Endothelial cell of umbilical vein (primary cell): ENCODE measurements at regions of chr13 and their contacts with region 1.

Region 1: DNA sequence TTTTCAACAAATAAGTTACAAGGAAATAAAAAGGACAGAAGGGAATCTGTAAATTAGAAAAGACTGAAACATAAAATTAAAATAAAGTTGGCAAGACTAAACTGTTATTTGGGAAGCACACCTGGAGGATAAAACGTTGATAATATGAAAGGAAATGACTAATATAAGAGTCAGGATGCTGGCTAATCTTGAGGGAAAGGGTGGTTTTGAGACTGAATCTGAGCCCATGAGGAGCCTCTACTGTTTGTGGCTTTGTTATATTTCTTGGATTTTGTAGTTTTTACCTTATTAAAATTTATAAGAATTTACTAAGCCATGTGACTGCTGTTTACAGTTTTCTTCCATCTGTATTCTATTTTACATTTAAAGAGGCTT is 718.0 kb upstream of the SPRY2 start:
- DNase-seq: peak; percentile 46
- H3K4me3 ChIP-seq: no peak overlapping the region
- H3K27ac ChIP-seq: peak overlapping the region; percentile 32
- H3K4me1 ChIP-seq: peaks cover 13% of the 10 kb centered on the region
- H3K27me3 ChIP-seq: no peaks in the 10 kb centered on the region
- CTCF ChIP-seq: no peak
- POLR2A ChIP-seq: no peak

Region 2: GRCh38 chr13:82330499-82330898 is 1271.6 kb after region 1 on chr13:
- CTCF ChIA-PET with region 1: no interaction called
- POLR2A ChIA-PET with region 1: no interaction called
- dilution Hi-C with region 1: no loop called
- intact Hi-C with region 1: loop called (anchors 2 kb)
- DNase-seq: peak; percentile 21
- H3K4me3 ChIP-seq: no peak overlapping the region
- H3K27ac ChIP-seq: no peak overlapping the region
- H3K4me1 ChIP-seq: no peaks in the 10 kb centered on the region
- H3K27me3 ChIP-seq: no peaks in the 10 kb centered on the region
- CTCF ChIP-seq: peak; percentile 14 to 35
- POLR2A ChIP-seq: no peak